ENCODE measurements at regions of chr6 and their contacts with region 1.

Region 1: GRCh38 chr6:26537846-26538571 is at the start of gene HMGN4:
- DNase-seq: peak; percentile 64 to 95 (median 90)
- H3K4me3 ChIP-seq: peak within 1 kb of the TSS; percentile 88
- H3K4me3 Mint-ChIP-seq: peak within 1 kb of the TSS; percentile 92 to 98 (median 94)
- H3K27ac ChIP-seq: peak within 1 kb of the TSS; percentile 89
- H3K27ac Mint-ChIP-seq: peak within 1 kb of the TSS; percentile 92 to 99 (median 96)
- H3K4me1 ChIP-seq: peaks cover 43% of the 10 kb centered on the region
- H3K4me1 Mint-ChIP-seq: peaks cover 56 to 79% (median 72%) of the 10 kb centered on the region in 3 donors
- H3K27me3 ChIP-seq: no peaks in the 10 kb centered on the region
- H3K27me3 Mint-ChIP-seq: peaks cover 0 to 16% of the 10 kb centered on the region in 2 donors
- total RNA-seq, gene HMGN4: 90.0 to 91.4 TPM

Region 2: GRCh38 chr6:26358511-26358981 is 179.5 kb before region 1 on chr6:
- CTCF ChIA-PET with region 1: no interaction called
- POLR2A ChIA-PET with region 1: no interaction called
- DNase-seq: no peak
- H3K4me3 ChIP-seq: no peak overlapping the region
- H3K4me3 Mint-ChIP-seq: no peak overlapping the region
- H3K27ac ChIP-seq: no peak overlapping the region
- H3K27ac Mint-ChIP-seq: no peak overlapping the region
- H3K4me1 ChIP-seq: peaks cover 25% of the 10 kb centered on the region
- H3K4me1 Mint-ChIP-seq: peaks cover 26 to 29% (median 29%) of the 10 kb centered on the region in 3 donors
- H3K27me3 ChIP-seq: no peaks in the 10 kb centered on the region
- H3K27me3 Mint-ChIP-seq: peaks cover 0 to 1% of the 10 kb centered on the region in 2 donors

Region 3: DNA sequence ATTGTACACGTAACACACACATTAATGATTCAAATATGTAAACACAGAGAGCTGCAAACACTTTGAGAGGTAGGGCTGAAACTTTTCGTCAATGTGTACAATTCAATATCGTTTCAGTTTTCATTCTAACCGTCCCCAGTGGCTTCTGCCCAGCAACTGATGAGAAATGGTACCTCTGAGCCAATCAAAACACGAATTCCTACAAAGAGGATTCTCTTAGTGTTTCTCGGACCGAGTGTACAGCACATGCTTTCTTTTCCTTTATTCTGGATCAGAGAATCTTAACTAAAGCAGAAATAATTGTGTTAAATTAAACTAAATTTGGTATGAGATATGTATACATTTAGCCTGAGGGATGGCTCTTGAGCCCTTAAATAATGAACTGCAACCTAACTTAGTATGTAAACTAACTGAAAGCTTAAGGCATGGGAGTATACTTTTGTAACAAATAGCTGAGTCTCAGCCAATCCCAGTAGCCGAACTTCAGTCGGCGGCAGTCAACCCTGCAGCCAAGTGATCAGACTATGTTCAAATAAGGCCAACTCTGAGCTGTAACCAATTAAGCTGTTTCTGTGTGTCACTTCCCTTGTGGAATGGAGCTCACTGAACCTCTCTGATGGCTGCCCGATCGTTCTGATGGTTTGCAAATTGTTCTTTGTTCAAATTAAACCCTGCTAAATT is 64.1 kb before region 1 on chr6:
- CTCF ChIA-PET with region 1: interaction called, 4 read pairs
- POLR2A ChIA-PET with region 1: interaction called, 24 read pairs
- DNase-seq: peak; percentile 66 to 91 (median 90)
- H3K4me3 ChIP-seq: peak overlapping the region; percentile 72
- H3K4me3 Mint-ChIP-seq: peak overlapping the region; percentile 95 to 99 (median 98)
- H3K27ac ChIP-seq: peak overlapping the region; percentile 94
- H3K27ac Mint-ChIP-seq: peak overlapping the region; percentile 90 to 100 (median 100)
- H3K4me1 ChIP-seq: peaks cover 51% of the 10 kb centered on the region
- H3K4me1 Mint-ChIP-seq: peaks cover 44 to 61% (median 58%) of the 10 kb centered on the region in 3 donors
- H3K27me3 ChIP-seq: no peaks in the 10 kb centered on the region
- H3K27me3 Mint-ChIP-seq: no peaks in the 10 kb centered on the region

Region 4: DNA sequence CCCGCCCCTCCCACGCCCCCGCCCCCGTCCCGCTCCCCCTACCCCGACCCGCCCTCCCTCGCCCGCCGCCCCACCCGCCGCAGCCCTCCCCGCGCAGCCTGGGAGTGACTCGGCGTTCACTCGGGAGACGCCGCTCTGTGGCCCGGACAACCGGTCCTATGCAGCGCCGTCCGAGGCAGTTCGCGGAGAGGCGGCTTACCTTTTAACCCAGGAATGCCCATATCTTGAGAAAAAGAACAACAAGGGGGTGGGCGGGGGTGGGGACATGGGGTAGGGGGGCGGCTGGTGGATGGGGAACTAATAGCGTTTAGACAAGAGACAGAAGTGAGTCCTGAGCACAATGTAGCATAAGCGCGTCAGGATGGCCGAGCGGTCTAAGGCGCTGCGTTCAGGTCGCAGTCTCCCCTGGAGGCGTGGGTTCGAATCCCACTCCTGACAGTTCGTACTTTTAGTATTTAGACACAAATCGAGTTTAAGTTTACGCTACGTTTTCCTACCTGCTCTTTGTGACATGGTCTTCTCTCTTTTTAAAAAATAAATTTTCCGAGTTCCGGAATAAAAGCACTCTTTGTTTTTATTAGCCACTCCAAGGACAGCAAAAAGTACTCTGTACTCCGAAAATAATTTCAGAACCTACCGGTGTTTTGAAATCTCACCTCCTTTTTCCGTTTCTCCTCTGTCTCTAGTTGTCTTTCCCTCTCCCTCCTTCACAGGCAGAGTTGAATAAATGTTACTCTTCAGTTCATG is 17.0 kb before region 1 on chr6:
- CTCF ChIA-PET with region 1: interaction called, 25 read pairs
- POLR2A ChIA-PET with region 1: interaction called, 43 read pairs
- DNase-seq: peak; percentile 81 to 92 (median 87)
- H3K4me3 ChIP-seq: peak overlapping the region; percentile 57
- H3K4me3 Mint-ChIP-seq: peak overlapping the region; percentile 76 to 97 (median 88)
- H3K27ac ChIP-seq: peak overlapping the region; percentile 84
- H3K27ac Mint-ChIP-seq: peak overlapping the region; percentile 81 to 97 (median 94)
- H3K4me1 ChIP-seq: peaks cover 7% of the 10 kb centered on the region
- H3K4me1 Mint-ChIP-seq: peaks cover 31 to 44% (median 33%) of the 10 kb centered on the region in 3 donors
- H3K27me3 ChIP-seq: no peaks in the 10 kb centered on the region
- H3K27me3 Mint-ChIP-seq: peaks cover 0 to 7% of the 10 kb centered on the region in 2 donors

Region 5: GRCh38 chr6:26553635-26554446 is 15.8 kb after region 1 on chr6:
- CTCF ChIA-PET with region 1: interaction called, 13 read pairs
- POLR2A ChIA-PET with region 1: interaction called, 34 read pairs
- DNase-seq: peak; percentile 49 to 84 (median 82)
- H3K4me3 ChIP-seq: peak overlapping the region; percentile 89
- H3K4me3 Mint-ChIP-seq: no peak overlapping the region
- H3K27ac ChIP-seq: peak overlapping the region; percentile 64
- H3K27ac Mint-ChIP-seq: no peak overlapping the region
- H3K4me1 ChIP-seq: peaks cover 11% of the 10 kb centered on the region
- H3K4me1 Mint-ChIP-seq: peaks cover 20 to 31% (median 29%) of the 10 kb centered on the region in 3 donors
- H3K27me3 ChIP-seq: no peaks in the 10 kb centered on the region
- H3K27me3 Mint-ChIP-seq: peaks cover 0 to 4% of the 10 kb centered on the region in 2 donors

Region 6: DNA sequence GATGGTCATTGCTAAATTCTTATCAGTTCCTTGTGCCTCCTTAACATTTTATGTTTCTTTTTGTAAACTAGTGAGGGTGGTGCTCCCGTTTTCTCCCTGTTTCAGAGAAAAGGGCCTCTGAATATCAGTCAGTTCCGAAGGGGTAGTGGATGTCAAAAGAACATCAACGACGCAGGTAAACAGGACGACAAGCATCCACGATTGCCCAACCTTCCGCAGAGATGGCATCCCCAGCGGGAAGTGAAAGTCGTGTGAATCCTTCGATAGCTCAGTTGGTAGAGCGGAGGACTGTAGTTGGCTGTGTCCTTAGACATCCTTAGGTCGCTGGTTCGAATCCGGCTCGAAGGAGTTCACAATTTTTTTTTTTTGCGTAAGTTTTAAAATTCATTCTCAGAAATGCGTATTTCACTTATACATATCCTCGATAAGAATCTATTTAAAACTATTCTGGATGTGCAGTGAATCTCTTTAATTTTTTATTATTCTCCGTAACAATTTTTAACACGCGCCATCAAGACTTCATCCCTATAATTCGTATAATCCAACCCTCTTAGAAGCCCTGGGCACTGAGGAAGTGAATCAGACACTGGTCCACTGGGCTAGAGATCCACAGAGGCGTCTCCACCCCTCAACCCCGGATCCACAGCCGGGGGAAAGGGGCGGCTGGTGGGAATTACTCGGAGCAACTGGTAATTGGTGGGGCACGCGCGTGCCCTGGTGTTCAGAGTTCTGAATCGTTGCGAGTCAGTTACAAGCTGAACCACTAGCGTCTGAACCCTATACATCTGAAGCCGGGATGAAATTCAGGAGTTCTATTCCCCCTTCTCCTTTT is 30.8 kb after region 1 on chr6:
- CTCF ChIA-PET with region 1: interaction called, 6 read pairs
- POLR2A ChIA-PET with region 1: interaction called, 17 read pairs
- DNase-seq: peak; percentile 95 to 99 (median 96)
- H3K4me3 ChIP-seq: peak overlapping the region; percentile 89
- H3K4me3 Mint-ChIP-seq: peak overlapping the region; percentile 91 to 97 (median 96)
- H3K27ac ChIP-seq: peak overlapping the region; percentile 75
- H3K27ac Mint-ChIP-seq: peak overlapping the region; percentile 89 to 99 (median 98)
- H3K4me1 ChIP-seq: peaks cover 6% of the 10 kb centered on the region
- H3K4me1 Mint-ChIP-seq: peaks cover 23 to 36% (median 29%) of the 10 kb centered on the region in 3 donors
- H3K27me3 ChIP-seq: no peaks in the 10 kb centered on the region
- H3K27me3 Mint-ChIP-seq: peaks cover 3 to 19% of the 10 kb centered on the region in 2 donors

Measured in CD8-positive, alpha-beta memory T cell (primary cell).